ENCODE measurements at regions of chrX and their contacts with region 1.

Region 1: DNA sequence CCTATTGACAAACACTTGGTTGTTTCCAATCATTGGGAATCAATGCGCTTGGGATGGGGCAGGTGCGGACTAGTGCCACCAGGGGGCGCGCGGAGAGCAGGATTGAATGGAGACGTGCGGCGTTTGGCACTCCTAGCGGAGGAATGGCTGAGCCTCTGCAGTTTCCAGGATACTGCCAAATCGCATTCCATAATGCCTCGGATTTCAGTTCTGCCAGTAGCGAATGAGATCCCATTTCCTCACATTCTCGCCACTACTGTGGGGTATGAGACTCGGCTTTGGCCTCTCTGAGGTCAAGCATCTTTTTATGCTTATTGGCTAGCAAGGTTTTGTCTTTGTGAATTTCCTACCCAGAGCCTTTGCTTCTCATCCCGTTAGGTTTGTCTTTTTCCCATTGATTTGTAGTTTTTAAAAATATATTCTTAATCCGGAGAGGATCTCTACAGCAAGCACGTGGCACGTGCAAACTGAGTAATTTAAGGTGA is 28.7 kb downstream of the CLDN34 start:
- DNase-seq: peak; percentile 78
- H3K4me3 Mint-ChIP-seq: no peak overlapping the region
- H3K27ac Mint-ChIP-seq: no peak overlapping the region
- H3K4me1 Mint-ChIP-seq: peaks cover 9% of the 10 kb centered on the region
- H3K27me3 Mint-ChIP-seq: no peaks in the 10 kb centered on the region

Region 2: GRCh38 chrX:8815464-8816065 is 1180.3 kb before region 1 on chrX:
- CTCF ChIA-PET with region 1: no interaction called
- intact Hi-C with region 1: loop called (anchors 5 kb)
- DNase-seq: peak; percentile 8
- H3K4me3 Mint-ChIP-seq: no peak overlapping the region
- H3K27ac Mint-ChIP-seq: no peak overlapping the region
- H3K4me1 Mint-ChIP-seq: no peaks in the 10 kb centered on the region
- H3K27me3 Mint-ChIP-seq: no peaks in the 10 kb centered on the region

Region 3: DNA sequence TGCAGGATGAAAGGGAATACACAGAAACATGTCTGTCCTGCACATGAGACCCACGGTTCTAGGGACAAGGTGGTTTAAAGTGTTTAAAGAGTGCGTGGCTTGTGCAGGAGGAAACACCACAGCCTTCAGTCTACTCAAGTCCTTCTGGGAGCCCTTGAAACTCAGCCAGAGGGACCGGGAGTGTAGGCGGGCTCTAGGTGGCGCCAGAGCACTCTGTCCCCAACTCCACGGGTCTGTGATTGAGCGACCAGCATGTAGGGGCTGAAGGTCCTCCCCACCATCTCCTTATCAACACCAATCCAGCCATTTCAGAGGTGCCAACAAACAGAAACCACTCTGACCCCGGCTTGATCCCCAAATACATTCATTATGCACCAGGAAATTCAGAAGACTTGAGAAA is 110.7 kb before region 1 on chrX:
- CTCF ChIA-PET with region 1: no interaction called
- intact Hi-C with region 1: loop called (anchors 1 kb)
- DNase-seq: peak; percentile 63
- H3K4me3 Mint-ChIP-seq: no peak overlapping the region
- H3K27ac Mint-ChIP-seq: no peak overlapping the region
- H3K4me1 Mint-ChIP-seq: peaks cover 2% of the 10 kb centered on the region
- H3K27me3 Mint-ChIP-seq: no peaks in the 10 kb centered on the region

Region 4: GRCh38 chrX:10077425-10078188 is 81.7 kb after region 1 on chrX:
- CTCF ChIA-PET with region 1: interaction called, 13 read pairs
- intact Hi-C with region 1: loop called (anchors 2 kb)
- DNase-seq: no peak
- H3K4me3 Mint-ChIP-seq: no peak overlapping the region
- H3K27ac Mint-ChIP-seq: no peak overlapping the region
- H3K4me1 Mint-ChIP-seq: peaks cover 7% of the 10 kb centered on the region
- H3K27me3 Mint-ChIP-seq: no peaks in the 10 kb centered on the region

Region 5: GRCh38 chrX:10098270-10098713 is 102.4 kb after region 1 on chrX:
- CTCF ChIA-PET with region 1: interaction called, 18 read pairs
- intact Hi-C with region 1: loop called (anchors 1 kb)
- DNase-seq: peak; percentile 80
- H3K4me3 Mint-ChIP-seq: peak overlapping the region; percentile 69
- H3K27ac Mint-ChIP-seq: peak overlapping the region; percentile 83
- H3K4me1 Mint-ChIP-seq: peaks cover 51% of the 10 kb centered on the region
- H3K27me3 Mint-ChIP-seq: no peaks in the 10 kb centered on the region

Measured in activated naive CD4-positive, alpha-beta T cell treated with anti-CD3 and anti-CD28 coated beads for 36 hours (primary cell).